ENCODE measurements at regions of chr4 and their contacts with region 1.

Region 1: DNA sequence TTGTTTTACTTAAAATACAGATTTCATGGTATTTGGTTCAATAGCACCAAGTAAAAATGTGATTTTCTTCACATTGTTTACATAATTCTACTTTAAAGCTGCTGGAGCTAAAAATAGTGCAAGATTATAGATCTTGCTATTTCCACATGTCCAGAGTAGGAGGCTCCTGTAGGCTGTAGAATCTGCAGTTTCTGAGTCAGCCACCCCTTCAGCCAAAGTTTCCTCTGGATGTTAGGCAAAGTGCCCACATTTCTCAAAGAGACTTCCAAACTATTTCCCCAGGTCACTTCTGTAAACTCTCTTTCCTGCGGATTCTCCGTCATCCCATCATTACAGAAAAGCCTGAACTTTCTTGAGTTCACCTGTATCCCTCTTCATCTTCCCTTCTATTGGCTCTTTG is 342.5 kb upstream of the FSTL5 start:
- ATAC-seq: no peak
- H3K4me3 ChIP-seq: no peak overlapping the region
- H3K27ac ChIP-seq: no peak overlapping the region
- H3K4me1 ChIP-seq: no peaks in the 10 kb centered on the region

Region 2: DNA sequence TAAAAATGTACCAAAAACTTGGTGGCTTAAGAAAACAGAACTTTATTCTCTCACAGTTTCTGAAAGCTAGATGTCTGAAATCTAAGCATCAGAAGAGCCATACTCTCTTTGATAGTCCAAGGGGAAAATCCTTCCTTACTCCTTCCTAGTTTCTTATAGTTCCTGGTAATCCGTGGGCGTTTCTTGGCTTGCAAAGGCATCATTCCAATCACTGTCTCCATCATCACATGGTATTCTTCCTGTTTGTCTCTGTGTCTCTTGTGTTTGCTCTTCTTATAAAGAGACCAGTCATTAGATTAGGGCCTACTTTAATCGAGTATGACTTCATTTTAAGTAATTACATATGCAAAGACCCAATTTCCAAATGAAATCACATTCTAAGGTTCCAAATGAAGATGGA is 223.6 kb before region 1 on chr4:
- in situ Hi-C with region 1: no loop called
- ATAC-seq: peak in 1 of 8 experiments; percentile 77
- H3K4me3 ChIP-seq: no peak overlapping the region
- H3K27ac ChIP-seq: no peak overlapping the region
- H3K4me1 ChIP-seq: no peaks in the 10 kb centered on the region

Region 3: DNA sequence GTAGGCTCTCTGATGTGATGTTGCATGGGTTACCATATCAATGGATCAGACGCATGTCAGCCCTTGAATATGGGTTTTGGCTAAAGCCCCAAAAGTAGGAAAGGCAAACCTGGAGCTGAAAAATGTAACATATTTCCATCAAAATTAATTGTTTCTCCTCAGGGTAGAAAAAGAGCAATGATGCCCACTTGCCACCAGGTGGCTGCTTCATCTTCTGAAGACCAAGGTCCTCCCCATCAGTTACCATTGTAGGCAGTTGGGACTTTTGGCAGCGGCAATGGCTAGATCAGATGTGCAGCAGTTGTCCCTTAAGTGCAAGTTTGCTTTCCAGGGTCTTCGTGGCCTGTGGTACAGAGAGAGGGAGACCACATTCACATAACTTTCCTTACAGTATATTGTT is 542.2 kb after region 1 on chr4:
- in situ Hi-C with region 1: loop called in 3 of 9 experiments (anchors 25 kb)
- ATAC-seq: peak in 3 of 8 experiments; percentile 31 to 65 (median 57)
- H3K4me3 ChIP-seq: no peak overlapping the region
- H3K27ac ChIP-seq: no peak overlapping the region
- H3K4me1 ChIP-seq: no peaks in the 10 kb centered on the region

Region 4: DNA sequence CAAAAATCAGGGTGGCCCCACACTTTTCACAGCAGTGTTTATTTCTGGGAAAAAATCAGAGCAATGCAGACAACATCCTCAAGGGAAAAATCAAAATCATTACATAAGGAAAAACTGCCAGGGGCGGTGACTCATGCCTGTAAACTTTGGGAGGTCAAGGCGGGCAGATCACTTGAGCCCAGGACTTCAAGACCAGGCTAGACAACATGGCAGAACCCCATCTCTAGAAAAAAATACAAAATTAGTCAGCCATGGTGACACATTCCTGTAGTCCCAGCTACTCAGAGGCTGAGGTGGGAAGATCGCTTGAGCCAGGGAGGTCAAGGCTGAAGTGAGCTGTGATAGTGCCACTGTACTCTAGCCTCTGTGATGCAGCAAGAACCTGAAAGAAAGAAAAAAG is 557.6 kb after region 1 on chr4:
- in situ Hi-C with region 1: loop called in 1 of 9 experiments (anchors 25 kb)
- ATAC-seq: no peak
- H3K4me3 ChIP-seq: no peak overlapping the region
- H3K27ac ChIP-seq: no peak overlapping the region
- H3K4me1 ChIP-seq: no peaks in the 10 kb centered on the region

Region 5: GRCh38 chr4:163217505-163217904 is 711.3 kb after region 1 on chr4:
- in situ Hi-C with region 1: no loop called
- ATAC-seq: no peak
- H3K4me3 ChIP-seq: no peak overlapping the region
- H3K27ac ChIP-seq: no peak overlapping the region
- H3K4me1 ChIP-seq: no peaks in the 10 kb centered on the region

Region 6: DNA sequence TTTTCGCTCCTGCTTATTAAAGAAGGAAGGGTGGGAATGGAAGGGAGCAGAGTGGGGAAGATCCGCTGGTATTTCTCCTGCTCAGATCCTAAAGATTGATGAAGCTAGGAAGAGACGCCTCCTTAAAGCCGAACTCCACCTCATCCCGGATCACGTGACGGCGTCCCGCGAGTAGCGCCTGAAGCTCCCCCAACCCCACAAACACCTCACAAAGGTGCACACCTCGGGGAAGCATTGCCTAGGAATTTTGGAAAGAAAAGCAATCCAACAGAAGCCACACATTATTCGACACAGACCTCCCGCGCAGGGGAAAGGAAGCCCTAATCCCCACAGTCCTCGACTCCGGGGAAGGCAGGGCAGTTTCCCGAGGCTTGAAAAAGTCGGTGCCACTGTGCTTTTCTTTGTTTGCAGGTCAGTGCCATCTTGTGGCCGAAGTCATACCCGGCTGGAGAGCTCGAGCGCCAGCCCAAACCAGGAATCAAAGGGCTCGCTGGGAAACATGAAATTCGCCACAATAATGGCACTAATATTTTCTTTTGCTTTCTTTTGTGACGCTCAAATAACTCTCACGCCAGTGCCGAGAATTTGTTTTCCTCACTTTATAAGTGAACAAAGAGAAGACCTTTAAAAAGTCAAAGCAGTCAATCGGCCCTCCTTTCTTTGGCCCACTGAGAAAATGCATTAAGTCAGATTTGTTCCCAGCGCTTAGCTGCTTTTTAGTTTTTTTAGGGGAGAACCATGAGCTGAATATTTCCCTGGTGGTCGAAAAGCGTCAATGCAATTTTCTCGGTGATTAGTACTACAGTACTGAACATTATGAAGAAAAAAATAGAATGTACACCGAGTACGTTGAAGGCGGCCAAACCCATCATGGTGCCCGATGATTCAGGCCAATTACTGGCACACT is 826.5 kb after region 1 on chr4 and contains the start of gene NPY1R:
- in situ Hi-C with region 1: loop called in 1 of 9 experiments (anchors 25 kb)
- ATAC-seq: peak; percentile 83 to 96 (median 88)
- H3K4me3 ChIP-seq: peak within 1 kb of the TSS; percentile 50 to 75 (median 69)
- H3K27ac ChIP-seq: no peak within 1 kb of the TSS
- H3K4me1 ChIP-seq: peaks cover 3 to 7% of the 10 kb centered on the region in 2 donors
- total RNA-seq, gene NPY1R: 0.25 to 3.2 (median 1.7) TPM in 7 of 8 experiments, not detected in the other

Region 7: DNA sequence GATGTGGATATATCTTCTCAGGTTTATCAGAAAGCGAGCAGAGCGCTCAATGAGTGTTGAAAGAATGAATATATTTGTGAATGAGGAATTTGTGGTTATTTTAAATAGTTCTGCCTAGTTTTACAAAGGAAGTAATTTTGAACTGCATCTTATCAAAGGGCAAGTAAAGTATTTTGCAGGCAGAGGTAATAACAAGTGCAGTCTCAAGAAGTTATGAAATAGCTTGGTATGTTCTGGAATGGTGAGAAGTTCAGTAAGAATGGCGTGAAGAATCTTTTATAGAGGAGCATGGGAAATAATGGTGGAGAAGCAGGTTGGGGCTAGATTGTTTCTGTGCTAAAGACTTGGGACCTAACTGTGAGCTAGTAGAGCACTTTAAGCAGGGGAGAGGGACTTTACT is 999.1 kb after region 1 on chr4:
- in situ Hi-C with region 1: loop called in 1 of 9 experiments (anchors 25 kb)
- ATAC-seq: no peak
- H3K4me3 ChIP-seq: no peak overlapping the region
- H3K27ac ChIP-seq: no peak overlapping the region
- H3K4me1 ChIP-seq: peaks cover 0 to 2% of the 10 kb centered on the region in 2 donors